RWPE1 (cell line): ENCODE measurements at regions of chr14 and their contacts with region 1.

Region 1: GRCh38 chr14:20343092-20343861 is at the start of gene PARP2:
- DNase-seq: peak; percentile 96
- H3K27ac ChIP-seq: peak within 1 kb of the TSS; percentile 98
- CTCF ChIP-seq: no peak

Region 2: GRCh38 chr14:20219033-20219432 is 124.2 kb before region 1 on chr14:
- CTCF ChIA-PET with region 1: no interaction called
- POLR2A ChIA-PET with region 1: no interaction called
- DNase-seq: no peak
- H3K27ac ChIP-seq: no peak overlapping the region
- CTCF ChIP-seq: no peak

Region 3: GRCh38 chr14:20327005-20327869 is 16.0 kb before region 1 on chr14:
- CTCF ChIA-PET with region 1: interaction called, 15 read pairs
- POLR2A ChIA-PET with region 1: interaction called, 8 read pairs
- DNase-seq: peak; percentile 47
- H3K27ac ChIP-seq: no peak overlapping the region
- CTCF ChIP-seq: peak; percentile 72

Region 4: GRCh38 chr14:20681348-20682126 is 338.3 kb after region 1 on chr14:
- CTCF ChIA-PET with region 1: no interaction called
- POLR2A ChIA-PET with region 1: interaction called, 11 read pairs
- DNase-seq: peak; percentile 52
- H3K27ac ChIP-seq: peak overlapping the region; percentile 99
- CTCF ChIP-seq: no peak